Calu3 (cell line): ENCODE measurements at regions of chr5 and their contacts with region 1.

Region 1: GRCh38 chr5:74833537-74834266 is 32.5 kb downstream of the FAM169A start:
- DNase-seq: peak; percentile 26
- H3K4me3 Mint-ChIP-seq: peak overlapping the region; percentile 16
- H3K27ac Mint-ChIP-seq: no peak overlapping the region
- H3K4me1 Mint-ChIP-seq: peaks cover 26% of the 10 kb centered on the region
- H3K27me3 Mint-ChIP-seq: no peaks in the 10 kb centered on the region
- CTCF ChIP-seq: no peak

Region 2: GRCh38 chr5:74725331-74725730 is 108.4 kb before region 1 on chr5:
- CTCF ChIA-PET with region 1: interaction called, 11 read pairs
- intact Hi-C with region 1: no loop called
- DNase-seq: no peak
- H3K4me3 Mint-ChIP-seq: no peak overlapping the region
- H3K27ac Mint-ChIP-seq: no peak overlapping the region
- H3K4me1 Mint-ChIP-seq: no peaks in the 10 kb centered on the region
- H3K27me3 Mint-ChIP-seq: no peaks in the 10 kb centered on the region
- CTCF ChIP-seq: no peak

Region 3: GRCh38 chr5:74889523-74890105 is 55.9 kb after region 1 on chr5:
- CTCF ChIA-PET with region 1: no interaction called
- intact Hi-C with region 1: no loop called
- DNase-seq: no peak
- H3K4me3 Mint-ChIP-seq: no peak overlapping the region
- H3K27ac Mint-ChIP-seq: no peak overlapping the region
- H3K4me1 Mint-ChIP-seq: no peaks in the 10 kb centered on the region
- H3K27me3 Mint-ChIP-seq: no peaks in the 10 kb centered on the region
- CTCF ChIP-seq: no peak